Dendritic cell treated with granulocyte-macrophage colony-stimulating factor and Interleukin-4, amounts not matched to agents 40 ng/mL and 50 ng/mL, for 4 days (primary cell): ENCODE measurements at regions of chr11 and their contacts with region 1.

Region 1: DNA sequence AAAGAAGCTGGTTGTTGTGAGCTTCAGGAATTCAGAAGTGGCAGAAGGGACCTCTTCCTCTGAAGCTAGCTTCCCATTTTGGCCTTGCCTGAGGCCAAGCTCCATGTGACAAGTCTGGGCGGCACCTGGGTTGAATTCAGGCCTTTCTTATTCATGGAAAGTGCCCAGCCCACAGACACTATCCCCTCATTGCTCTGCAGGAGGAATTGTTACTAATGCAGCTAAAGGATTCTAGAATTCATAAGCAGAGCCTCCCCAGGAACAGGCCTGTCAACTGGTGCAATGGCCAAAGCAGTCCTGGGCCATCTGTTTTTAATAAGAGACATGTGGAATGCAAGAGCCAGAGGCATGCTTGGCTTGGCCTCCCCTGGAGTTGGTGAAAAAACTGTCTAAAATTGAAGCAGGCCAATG is 71.4 kb downstream of the SLC1A2 start:
- H3K4me3 Mint-ChIP-seq: no peak overlapping the region
- H3K27ac Mint-ChIP-seq: peak overlapping the region; percentile 82
- H3K4me1 Mint-ChIP-seq: peaks cover 87% of the 10 kb centered on the region
- H3K27me3 Mint-ChIP-seq: no peaks in the 10 kb centered on the region

Region 2: DNA sequence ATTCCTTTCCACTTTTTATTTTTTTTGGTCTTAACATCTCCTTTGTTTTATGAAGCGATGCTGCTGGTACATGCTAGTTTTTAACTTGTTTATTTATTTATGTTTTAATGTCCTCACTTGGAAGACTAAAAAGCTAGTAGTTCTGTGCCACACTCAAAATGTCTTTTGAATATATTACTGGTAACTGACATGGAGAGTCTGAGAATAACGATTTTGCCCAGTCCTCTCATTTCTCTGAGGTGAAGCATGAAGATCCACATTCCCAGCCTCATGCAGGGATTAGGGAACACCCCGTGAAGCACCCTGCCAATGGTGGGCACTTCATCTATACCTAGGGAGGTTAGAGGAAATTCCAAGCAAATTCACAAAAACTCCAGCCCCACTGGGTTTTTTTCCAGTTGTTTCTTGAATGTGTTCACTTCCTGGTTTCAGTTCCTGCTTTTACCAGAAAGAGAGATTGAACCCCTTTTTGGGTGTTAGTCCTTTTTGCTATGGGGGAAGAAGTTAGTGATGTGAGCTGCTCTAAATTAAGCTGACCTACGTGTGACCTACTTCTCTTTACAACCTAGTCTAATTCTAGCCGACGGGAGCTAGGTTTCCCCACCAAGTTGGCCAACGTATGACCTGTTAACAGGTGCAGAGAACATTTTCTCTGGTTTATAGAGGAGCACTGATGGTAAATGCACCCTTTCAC is 34.7 kb before region 1 on chr11:
- intact Hi-C with region 1: loop called (anchors 5 kb)
- H3K4me3 Mint-ChIP-seq: no peak overlapping the region
- H3K27ac Mint-ChIP-seq: peak overlapping the region; percentile 72
- H3K4me1 Mint-ChIP-seq: peaks cover 69% of the 10 kb centered on the region
- H3K27me3 Mint-ChIP-seq: no peaks in the 10 kb centered on the region

Region 3: GRCh38 chr11:35380586-35380985 is 32.7 kb after region 1 on chr11:
- intact Hi-C with region 1: loop called (anchors 5 kb)
- H3K4me3 Mint-ChIP-seq: no peak overlapping the region
- H3K27ac Mint-ChIP-seq: no peak overlapping the region
- H3K4me1 Mint-ChIP-seq: peaks cover 11% of the 10 kb centered on the region
- H3K27me3 Mint-ChIP-seq: peaks cover 3% of the 10 kb centered on the region